Sigmoid colon (tissue), 7 donors: ENCODE measurements at regions of chr2 and their contacts with region 1.

Region 1: GRCh38 chr2:121649596-121650314 is 493 bp upstream of the CLASP1 start:
- DNase-seq: peak; percentile 99
- H3K4me3 ChIP-seq: peak overlapping the region; percentile 77 to 94 (median 85)
- H3K27ac ChIP-seq: peak overlapping the region; percentile 93 to 98 (median 96)
- H3K4me1 ChIP-seq: peaks cover 0 to 46% (median 30%) of the 10 kb centered on the region in 4 donors
- H3K27me3 ChIP-seq: no peaks in the 10 kb centered on the region
- CTCF ChIP-seq: no peak
- EP300 ChIP-seq: peak in 1 of 4 donors; percentile 48
- POLR2A ChIP-seq: peak in 1 of 2 donors; percentile 4

Region 2: GRCh38 chr2:121479882-121480522 is 169.8 kb before region 1 on chr2:
- intact Hi-C with region 1: loop called (anchors 5 kb)
- DNase-seq: no peak
- H3K4me3 ChIP-seq: no peak overlapping the region
- H3K27ac ChIP-seq: peak overlapping the region in 3 of 4 donors; percentile 21 to 61 (median 33)
- H3K4me1 ChIP-seq: peaks cover 0 to 75% (median 58%) of the 10 kb centered on the region in 4 donors
- H3K27me3 ChIP-seq: no peaks in the 10 kb centered on the region
- CTCF ChIP-seq: no peak
- EP300 ChIP-seq: no peak
- POLR2A ChIP-seq: no peak

Region 3: DNA sequence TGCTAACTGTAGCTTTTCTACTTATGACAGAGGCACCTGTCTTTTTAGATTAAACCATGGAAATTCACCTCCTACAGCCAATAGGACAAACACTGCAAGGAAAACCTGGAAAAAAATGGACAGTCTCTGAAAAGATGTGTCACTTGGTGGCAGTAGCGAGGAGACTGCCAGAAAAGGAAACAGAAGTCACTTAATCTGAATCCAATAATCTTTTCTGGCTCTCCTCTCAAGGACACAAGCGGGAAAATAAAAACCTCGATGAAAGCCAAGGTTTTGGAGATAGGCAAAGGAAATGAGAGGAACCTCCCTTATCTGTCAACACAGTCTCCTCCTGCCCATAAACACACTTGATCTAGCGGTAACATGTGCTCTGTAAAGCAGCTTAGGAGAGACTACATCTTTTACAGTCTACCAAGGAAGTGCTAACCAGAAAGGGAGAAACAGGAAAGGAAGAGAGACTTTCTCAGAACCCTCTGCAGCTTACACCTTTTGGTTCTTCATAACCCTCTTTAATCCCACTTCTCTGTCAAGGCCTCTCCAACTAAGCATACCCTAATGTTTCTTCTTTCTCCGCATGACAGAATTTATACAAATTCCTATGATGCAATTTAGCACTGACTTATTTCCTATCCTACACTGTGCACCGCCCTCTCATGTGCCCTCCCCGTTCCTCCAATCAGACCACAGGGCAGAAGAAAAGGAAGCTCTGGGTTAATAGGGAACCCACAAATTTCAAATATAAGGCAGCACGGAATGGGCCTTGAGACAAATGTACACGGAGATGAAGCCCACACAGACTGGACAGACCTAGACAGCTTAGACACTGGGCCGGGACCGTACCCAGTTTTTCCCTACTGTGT is 53.3 kb before region 1 on chr2:
- intact Hi-C with region 1: loop called (anchors 5 kb)
- DNase-seq: no peak
- H3K4me3 ChIP-seq: peak overlapping the region in 2 of 4 donors; percentile 6 to 7
- H3K27ac ChIP-seq: peak overlapping the region in 3 of 4 donors; percentile 9 to 54 (median 28)
- H3K4me1 ChIP-seq: peaks cover 0 to 22% (median 18%) of the 10 kb centered on the region in 4 donors
- H3K27me3 ChIP-seq: no peaks in the 10 kb centered on the region
- CTCF ChIP-seq: no peak
- EP300 ChIP-seq: no peak
- POLR2A ChIP-seq: no peak

Region 4: DNA sequence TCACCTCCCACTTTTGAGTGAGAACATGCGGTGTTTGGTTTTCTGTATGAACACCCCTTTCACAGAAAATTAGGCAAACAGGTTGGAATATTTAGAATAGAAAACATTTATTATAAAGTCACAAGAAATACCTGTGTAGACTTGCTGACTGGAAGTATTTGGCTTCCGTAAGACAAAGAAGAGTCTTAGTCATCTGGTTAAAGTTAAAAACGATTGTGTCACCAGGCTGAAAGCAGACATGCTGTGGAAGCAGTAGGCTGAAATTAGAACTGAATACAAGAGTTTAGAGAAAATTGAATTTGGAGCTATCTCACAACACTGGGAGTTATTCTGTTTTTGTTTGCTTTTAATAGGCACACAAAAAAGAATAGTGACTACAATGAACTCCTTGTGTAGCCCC is 15.7 kb after region 1 on chr2:
- intact Hi-C with region 1: no loop called
- DNase-seq: no peak
- H3K4me3 ChIP-seq: no peak overlapping the region
- H3K27ac ChIP-seq: no peak overlapping the region
- H3K4me1 ChIP-seq: no peaks in the 10 kb centered on the region
- H3K27me3 ChIP-seq: no peaks in the 10 kb centered on the region
- CTCF ChIP-seq: no peak
- EP300 ChIP-seq: no peak
- POLR2A ChIP-seq: no peak

Region 5: DNA sequence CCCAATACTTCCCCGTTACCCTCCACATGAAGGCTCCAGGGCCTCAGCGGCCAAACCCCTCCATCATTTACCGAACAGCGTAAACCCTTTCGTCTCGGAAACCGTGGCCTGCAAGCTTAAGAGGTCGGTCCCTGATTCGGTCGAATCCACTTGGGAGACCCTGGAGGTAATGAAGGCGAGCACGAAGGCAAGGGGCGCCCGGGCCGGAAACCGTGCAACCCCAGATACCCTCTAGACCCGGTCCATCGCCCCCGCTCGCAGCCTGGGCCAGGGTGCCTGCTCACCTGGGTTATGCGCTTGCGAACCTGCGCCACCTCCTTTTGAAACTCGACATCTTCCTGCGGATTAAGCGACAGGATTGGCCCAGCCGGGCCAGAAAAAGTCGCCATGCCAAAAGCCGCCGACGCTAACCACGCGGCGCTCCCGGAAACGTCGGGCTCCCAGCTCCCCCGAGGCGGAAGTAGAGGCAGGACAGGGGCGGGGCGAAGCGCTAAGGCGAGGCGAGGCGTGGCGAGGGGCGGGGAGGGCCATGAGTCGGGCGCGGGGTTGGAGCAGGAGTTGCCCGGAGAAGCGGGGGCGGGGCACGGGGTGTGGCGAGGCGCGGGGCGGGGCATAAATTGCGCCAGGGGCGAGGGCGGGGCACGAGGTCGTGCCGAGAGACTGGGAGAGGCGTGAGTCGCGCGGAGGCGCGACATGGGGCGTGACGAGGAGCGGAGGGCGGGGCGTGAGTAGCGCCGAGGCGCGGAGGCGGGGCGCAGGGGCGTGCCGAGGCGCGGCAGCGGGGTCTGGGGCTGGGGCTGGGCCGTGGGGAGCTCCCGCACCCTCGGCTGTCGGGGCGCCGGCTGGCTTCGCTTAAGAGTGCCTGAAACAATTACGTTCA is 86.9 kb after region 1 on chr2 and contains the start of gene NIFK:
- intact Hi-C with region 1: loop called (anchors 2 kb)
- DNase-seq: peak; percentile 99
- H3K4me3 ChIP-seq: peak within 1 kb of the TSS; percentile 77 to 98 (median 91)
- H3K27ac ChIP-seq: peak within 1 kb of the TSS; percentile 82 to 91 (median 86)
- H3K4me1 ChIP-seq: peaks cover 0 to 18% (median 13%) of the 10 kb centered on the region in 4 donors
- H3K27me3 ChIP-seq: no peaks in the 10 kb centered on the region
- CTCF ChIP-seq: no peak
- EP300 ChIP-seq: no peak
- POLR2A ChIP-seq: peak; percentile 21 to 37
- total RNA-seq, gene NIFK: 25.4 to 51.2 (median 32.1) TPM